Activated T-helper 1 cell treated with anti-CD3 and anti-CD28 coated beads, Interleukin-12 subunit alpha, Interleukin-12 subunit beta, Interleukin-2, Interleukin-4 antibody, amounts not matched to agents 30 ng/mL and 10 ng/mL and 1 ng/mL, durations not matched to agents 14 hours and 24 hours and 36 hours (primary cell): ENCODE measurements at regions of chr12 and their contacts with region 1.

Region 1: DNA sequence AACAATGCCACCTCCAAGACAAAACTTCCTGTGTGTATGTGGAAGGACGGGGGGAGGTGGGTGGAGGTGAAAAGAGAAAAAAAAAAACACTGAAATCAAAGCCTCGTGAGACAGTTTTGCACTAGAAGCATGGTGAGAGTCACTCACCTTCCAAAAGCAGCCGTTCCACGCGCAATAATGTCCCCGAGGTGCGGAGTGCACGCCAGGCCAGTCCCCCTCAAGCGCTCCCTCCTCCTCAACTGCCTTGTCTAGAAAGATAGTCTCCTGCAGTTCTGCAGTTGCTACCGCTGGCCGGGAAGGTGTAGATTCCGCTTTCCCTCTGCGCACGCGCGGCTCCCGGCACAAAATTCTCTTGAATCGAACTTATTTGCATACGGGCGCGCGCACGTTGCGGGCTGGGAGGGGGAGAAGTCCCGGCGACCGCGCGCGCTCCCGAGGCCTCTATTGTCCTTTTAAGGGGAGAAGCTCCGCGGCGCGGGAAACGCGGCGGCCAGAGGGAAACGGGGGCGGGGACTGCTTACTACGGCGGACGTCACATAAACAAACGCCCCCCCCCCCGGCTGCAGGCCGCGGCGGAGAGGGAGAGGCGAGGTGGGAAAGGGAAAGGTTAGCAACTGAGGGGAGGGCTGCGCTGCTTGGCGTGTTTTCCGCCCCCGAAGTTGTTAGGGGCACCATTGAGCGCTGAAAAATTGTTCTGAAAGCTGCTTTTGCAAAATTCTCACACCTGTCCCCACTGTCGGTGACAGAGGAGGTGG is at the start of gene SINHCAF:
- DNase-seq: peak; percentile 98
- H3K4me3 Mint-ChIP-seq: peak within 1 kb of the TSS; percentile 97
- H3K27ac Mint-ChIP-seq: peak within 1 kb of the TSS; percentile 95
- H3K4me1 Mint-ChIP-seq: peaks cover 41% of the 10 kb centered on the region
- H3K27me3 Mint-ChIP-seq: peaks cover 15% of the 10 kb centered on the region
- total RNA-seq, gene SINHCAF: 270 and 276 TPM in 2 replicates

Region 2: DNA sequence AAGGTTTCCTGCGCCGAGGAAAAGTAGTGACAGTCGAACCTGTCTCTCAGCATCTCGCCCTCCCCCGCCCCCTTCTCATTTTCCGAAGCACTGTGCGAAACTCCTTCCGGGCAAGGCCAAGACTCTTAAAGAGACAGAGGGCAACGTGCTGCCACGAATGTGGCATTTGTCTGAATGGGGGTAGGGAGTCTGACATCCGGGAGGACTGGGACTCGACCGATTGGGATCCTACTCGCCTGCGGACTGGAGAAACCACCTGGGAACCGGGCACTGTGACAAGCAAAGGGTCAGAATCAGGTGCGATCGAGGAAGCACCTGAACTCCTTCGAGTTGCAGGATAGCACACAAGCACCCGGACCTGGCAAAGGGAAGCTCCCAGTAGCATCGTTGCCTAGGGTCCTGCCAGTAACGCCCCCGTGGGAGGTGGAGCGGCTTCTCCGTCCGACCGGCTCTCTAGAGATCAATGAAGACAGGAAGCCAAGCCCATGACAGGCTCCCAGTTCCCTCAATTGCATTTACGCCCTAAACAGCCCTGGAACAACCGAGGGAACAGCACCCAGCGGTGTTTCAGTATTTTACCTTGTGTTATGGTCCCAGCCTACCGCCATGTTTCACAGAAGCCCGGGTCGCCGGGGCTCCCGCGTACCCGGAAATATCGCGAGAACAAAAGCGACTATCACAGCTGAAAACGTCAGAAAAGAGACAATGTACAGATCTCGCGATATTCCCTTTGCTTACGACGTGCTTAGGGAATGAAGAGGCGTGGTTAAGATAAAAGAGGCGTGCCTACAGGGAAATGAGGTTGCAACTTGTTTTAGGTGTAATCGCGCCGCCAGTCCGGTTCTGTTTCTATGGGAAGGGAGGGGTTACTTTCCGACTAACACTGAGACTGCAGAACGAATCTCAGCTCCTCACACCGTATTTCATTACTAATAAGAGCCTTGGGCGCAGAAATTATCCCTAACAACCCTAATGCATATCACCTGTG is 1945.2 kb before region 1 on chr12 and contains the start of gene ERGIC2:
- intact Hi-C with region 1: loop called (anchors 2 kb)
- DNase-seq: peak; percentile 90
- H3K4me3 Mint-ChIP-seq: peak within 1 kb of the TSS; percentile 97
- H3K27ac Mint-ChIP-seq: peak within 1 kb of the TSS; percentile 94
- H3K4me1 Mint-ChIP-seq: peaks cover 31% of the 10 kb centered on the region
- H3K27me3 Mint-ChIP-seq: peaks cover 4% of the 10 kb centered on the region
- total RNA-seq, gene ERGIC2: 94.9 and 105 TPM in 2 replicates

Region 3: DNA sequence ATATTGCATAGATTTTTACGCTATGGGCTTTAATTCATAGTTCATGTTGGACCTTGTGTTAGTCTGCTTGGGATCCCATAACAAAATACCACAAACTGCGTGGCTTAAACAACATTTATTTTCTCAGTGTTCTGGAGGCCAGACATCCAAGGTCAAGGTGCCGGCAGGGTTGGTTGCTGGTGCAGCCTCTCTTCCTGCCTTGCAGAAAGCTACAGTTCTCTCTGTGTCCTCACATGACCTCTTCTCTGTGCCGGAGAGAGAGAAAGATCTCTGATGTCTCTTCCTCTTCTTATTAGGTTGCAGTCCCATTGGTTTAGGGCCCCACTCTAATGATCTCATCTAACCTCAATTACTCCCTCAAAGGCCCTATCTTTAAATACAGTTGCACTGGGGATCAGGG is 800.9 kb before region 1 on chr12:
- intact Hi-C with region 1: no loop called
- DNase-seq: no peak
- H3K4me3 Mint-ChIP-seq: no peak overlapping the region
- H3K27ac Mint-ChIP-seq: no peak overlapping the region
- H3K4me1 Mint-ChIP-seq: no peaks in the 10 kb centered on the region
- H3K27me3 Mint-ChIP-seq: no peaks in the 10 kb centered on the region

Region 4: DNA sequence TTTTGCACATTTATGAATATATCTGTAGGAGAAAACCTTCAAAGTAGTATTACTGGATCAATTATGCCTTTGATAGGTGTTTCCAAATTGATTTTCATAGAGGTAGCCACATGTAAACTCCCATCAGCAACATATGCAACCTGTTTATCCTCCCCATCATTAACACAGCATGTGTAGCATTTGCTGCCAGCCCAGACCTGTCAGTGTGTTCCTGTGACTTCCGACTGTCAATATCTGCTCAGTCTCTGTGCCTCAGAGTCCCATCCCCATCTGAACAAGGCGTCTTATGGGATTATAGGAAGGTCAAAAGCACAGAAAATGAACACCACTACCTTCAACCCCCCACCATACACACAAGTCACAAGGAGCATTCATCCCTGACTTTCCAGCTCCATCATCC is 561.8 kb before region 1 on chr12:
- intact Hi-C with region 1: no loop called
- DNase-seq: no peak
- H3K4me3 Mint-ChIP-seq: no peak overlapping the region
- H3K27ac Mint-ChIP-seq: no peak overlapping the region
- H3K4me1 Mint-ChIP-seq: no peaks in the 10 kb centered on the region
- H3K27me3 Mint-ChIP-seq: peaks cover 18% of the 10 kb centered on the region

Region 5: DNA sequence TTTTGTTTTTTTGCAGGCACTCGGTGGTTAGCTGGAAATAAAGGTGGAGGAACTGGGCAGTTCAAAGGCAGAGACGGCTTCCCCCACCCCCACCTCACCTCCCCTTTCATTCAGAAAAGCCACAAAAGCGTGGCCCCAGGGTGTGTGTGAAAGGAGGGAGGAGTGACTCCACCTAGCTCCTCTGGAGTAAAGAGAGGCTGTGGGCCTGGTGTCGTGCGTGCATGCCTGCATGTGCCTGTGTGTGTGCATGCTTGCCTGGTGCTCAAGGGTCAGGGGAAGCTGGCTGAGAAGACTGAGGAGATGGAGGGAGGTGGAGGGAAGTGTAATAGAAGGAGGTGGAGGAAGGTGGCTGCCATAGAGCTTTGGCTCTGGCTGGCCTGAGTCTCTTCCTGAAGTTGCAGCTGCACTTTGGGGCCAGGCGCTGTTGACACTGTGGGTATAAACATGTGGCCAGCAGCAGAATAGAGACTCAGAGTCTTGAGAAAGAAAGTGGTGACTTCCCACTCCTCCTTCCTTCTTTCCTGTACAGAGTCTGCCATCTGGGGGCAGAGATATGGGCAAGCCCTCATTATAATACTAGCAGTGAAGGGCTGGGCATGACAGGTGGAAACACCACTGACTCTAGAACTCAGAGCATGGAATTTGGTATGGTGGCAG is 36.8 kb after region 1 on chr12:
- intact Hi-C with region 1: loop called (anchors 1 kb)
- DNase-seq: peak; percentile 24
- H3K4me3 Mint-ChIP-seq: peak overlapping the region; percentile 66
- H3K27ac Mint-ChIP-seq: peak overlapping the region; percentile 85
- H3K4me1 Mint-ChIP-seq: peaks cover 21% of the 10 kb centered on the region
- H3K27me3 Mint-ChIP-seq: peaks cover 5% of the 10 kb centered on the region

Region 6: DNA sequence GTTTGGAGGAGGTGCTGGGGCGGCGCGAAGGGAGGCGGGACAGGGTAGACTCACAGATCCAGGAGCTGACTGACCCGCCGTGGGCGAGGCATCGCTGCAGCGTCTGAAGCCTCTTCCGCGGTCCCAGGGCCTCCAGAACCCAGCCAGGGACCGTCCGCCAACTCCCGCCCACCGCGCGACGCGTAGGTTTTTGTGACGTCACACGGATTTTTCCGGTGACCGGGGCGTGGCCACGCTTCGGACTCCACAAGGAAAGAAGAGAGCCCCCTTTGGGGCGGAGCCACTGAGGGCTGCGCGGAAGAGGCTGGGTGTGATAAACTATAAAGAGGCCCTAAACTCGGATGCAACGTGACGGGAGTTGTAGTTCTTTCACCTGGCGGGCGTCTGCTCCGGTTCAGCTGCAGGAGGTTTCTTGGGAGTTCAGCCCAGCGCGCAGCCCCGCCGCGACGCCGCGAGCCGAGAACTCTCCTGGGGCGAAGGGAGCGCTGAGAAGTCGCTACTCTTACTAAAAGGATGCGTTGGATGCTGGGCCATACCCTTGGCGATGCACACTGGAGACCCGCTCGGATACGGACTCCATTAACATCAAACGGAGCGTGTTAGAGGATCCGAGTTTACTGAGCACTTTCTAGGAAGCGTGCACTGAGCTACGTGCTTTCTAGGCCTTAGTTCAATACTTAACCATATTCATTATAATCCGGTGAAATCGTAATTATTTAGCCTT is 403.0 kb after region 1 on chr12 and contains the start of gene AMN1:
- intact Hi-C with region 1: loop called (anchors 1 kb)
- DNase-seq: peak; percentile 100
- H3K4me3 Mint-ChIP-seq: peak within 1 kb of the TSS; percentile 98
- H3K27ac Mint-ChIP-seq: peak within 1 kb of the TSS; percentile 99
- H3K4me1 Mint-ChIP-seq: peaks cover 53% of the 10 kb centered on the region
- H3K27me3 Mint-ChIP-seq: no peaks in the 10 kb centered on the region
- total RNA-seq, gene AMN1: 3.1 and 3.4 TPM in 2 replicates

Region 7: GRCh38 chr12:32139064-32139421 is 813.0 kb after region 1 on chr12:
- intact Hi-C with region 1: loop called (anchors 10 kb)
- DNase-seq: peak; percentile 20
- H3K4me3 Mint-ChIP-seq: peak overlapping the region; percentile 70
- H3K27ac Mint-ChIP-seq: peak overlapping the region; percentile 4
- H3K4me1 Mint-ChIP-seq: peaks cover 39% of the 10 kb centered on the region
- H3K27me3 Mint-ChIP-seq: peaks cover 11% of the 10 kb centered on the region

Region 8: DNA sequence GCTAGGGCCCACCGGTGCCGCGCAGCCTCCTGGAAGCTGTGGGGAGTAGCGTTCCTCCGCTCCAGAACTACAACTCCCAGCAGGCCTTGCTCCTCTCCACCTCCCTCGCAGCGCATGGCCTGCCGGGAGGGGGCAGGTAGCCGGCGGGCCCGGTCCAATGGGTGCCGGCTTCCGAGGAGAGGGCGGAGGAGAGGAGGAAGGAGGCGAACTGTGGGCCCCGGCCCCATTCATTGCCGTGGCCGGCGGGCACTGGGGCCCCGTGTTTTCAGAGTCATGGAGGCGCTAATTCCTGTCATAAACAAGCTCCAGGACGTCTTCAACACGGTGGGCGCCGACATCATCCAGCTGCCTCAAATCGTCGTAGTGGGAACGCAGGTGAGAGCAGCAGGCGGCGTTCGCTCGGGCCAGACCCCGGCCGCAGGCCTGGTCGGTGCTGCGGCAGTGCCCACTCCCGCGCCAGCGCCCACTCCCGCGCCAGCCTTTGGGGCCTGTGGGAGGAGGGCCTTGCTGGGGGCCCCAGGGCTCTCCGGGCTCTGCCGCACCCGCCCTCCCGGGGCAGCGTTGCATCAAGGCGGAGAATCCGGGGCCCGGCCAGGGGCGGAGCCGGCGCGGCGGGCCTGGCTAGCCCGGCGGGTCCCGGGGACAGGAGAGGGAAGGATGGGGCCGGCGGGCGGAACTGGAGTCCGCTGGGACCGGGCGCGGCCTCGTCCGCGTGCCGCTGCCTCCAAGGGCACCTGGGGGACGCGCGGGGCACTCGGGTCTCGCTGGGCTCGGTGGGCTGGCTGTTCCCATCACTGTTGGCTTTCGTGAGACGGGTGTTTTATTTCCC is 1353.3 kb after region 1 on chr12 and contains the start of gene DNM1L:
- intact Hi-C with region 1: loop called (anchors 2 kb)
- DNase-seq: peak; percentile 90
- H3K4me3 Mint-ChIP-seq: peak within 1 kb of the TSS; percentile 95
- H3K27ac Mint-ChIP-seq: peak within 1 kb of the TSS; percentile 92
- H3K4me1 Mint-ChIP-seq: peaks cover 35% of the 10 kb centered on the region
- H3K27me3 Mint-ChIP-seq: no peaks in the 10 kb centered on the region
- total RNA-seq, gene DNM1L: 87.0 and 91.9 TPM in 2 replicates